CD8-positive, alpha-beta T cell (primary cell): ENCODE measurements at regions of chr1 and their contacts with region 1.

Region 1: DNA sequence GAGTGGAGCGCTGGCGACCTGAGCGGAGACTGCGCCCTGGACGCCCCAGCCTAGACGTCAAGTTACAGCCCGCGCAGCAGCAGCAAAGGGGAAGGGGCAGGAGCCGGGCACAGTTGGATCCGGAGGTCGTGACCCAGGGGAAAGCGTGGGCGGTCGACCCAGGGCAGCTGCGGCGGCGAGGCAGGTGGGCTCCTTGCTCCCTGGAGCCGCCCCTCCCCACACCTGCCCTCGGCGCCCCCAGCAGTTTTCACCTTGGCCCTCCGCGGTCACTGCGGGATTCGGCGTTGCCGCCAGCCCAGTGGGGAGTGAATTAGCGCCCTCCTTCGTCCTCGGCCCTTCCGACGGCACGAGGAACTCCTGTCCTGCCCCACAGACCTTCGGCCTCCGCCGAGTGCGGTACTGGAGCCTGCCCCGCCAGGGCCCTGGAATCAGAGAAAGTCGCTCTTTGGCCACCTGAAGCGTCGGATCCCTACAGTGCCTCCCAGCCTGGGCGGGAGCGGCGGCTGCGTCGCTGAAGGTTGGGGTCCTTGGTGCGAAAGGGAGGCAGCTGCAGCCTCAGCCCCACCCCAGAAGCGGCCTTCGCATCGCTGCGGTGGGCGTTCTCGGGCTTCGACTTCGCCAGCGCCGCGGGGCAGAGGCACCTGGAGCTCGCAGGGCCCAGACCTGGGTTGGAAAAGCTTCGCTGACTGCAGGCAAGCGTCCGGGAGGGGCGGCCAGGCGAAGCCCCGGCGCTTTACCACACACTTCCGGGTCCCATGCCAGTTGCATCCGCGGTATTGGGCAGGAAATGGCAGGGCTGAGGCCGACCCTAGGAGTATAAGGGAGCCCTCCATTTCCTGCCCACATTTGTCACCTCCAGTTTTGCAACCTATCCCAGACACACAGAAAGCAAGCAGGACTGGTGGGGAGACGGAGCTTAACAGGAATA is 4.2 kb downstream of the TFAP2E start:
- DNase-seq: peak; percentile 27 to 85 (median 71)
- ATAC-seq: peak; percentile 78
- H3K4me3 ChIP-seq: peak overlapping the region; percentile 49 to 87
- H3K4me3 Mint-ChIP-seq: peak overlapping the region; percentile 90
- H3K27ac ChIP-seq: peak overlapping the region; percentile 4 to 54
- H3K27ac Mint-ChIP-seq: peak overlapping the region; percentile 82
- H3K4me1 ChIP-seq: peaks cover 24% of the 10 kb centered on the region
- H3K4me1 Mint-ChIP-seq: peaks cover 26% of the 10 kb centered on the region
- H3K27me3 ChIP-seq: no peaks in the 10 kb centered on the region
- H3K27me3 Mint-ChIP-seq: peaks cover 3% of the 10 kb centered on the region
- CTCF ChIP-seq: no peak

Region 2: DNA sequence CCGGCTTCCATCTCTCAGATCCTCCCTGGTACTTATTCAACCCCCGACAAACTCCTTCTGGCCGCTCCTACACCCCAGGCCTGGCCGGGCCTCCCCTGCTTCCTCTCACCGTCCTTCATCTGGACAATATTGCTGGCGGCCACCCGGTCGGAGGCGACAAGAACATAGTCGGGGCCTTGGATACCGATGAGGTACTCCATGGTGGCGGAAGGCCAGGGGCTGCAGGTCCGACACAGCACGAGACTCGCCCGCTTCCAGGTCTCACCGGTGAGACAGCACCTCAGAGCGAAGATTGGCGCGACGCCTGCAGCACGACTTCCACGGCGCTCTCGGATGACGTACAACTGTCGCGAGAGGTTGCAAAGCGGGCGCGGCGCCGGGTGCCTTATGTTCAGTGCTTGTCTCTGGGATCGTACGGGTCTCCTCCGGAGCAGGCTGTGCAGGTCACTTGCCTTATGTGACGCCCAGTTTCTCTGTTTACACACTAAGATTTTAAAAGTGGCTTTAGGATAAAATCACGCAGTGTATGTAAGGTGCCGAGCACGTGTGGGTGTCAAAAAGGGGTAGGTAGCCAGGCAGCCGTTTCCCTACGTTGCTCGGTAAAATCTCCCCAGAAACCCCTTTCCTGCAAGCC is 64.0 kb after region 1 on chr1 and contains the start of gene PSMB2:
- CTCF ChIA-PET with region 1: no interaction called
- POLR2A ChIA-PET with region 1: no interaction called
- intact Hi-C with region 1: loop called in 1 of 2 experiments (anchors 5 kb)
- DNase-seq: peak; percentile 91 to 99 (median 97)
- ATAC-seq: peak; percentile 94
- H3K4me3 ChIP-seq: peak within 1 kb of the TSS; percentile 94 to 97
- H3K4me3 Mint-ChIP-seq: peak within 1 kb of the TSS; percentile 100
- H3K27ac ChIP-seq: peak within 1 kb of the TSS; percentile 89 to 93
- H3K27ac Mint-ChIP-seq: peak within 1 kb of the TSS; percentile 97
- H3K4me1 ChIP-seq: peaks cover 33% of the 10 kb centered on the region
- H3K4me1 Mint-ChIP-seq: peaks cover 37% of the 10 kb centered on the region
- H3K27me3 ChIP-seq: peaks cover 0 to 8% of the 10 kb centered on the region in 2 experiments
- H3K27me3 Mint-ChIP-seq: peaks cover 16% of the 10 kb centered on the region
- CTCF ChIP-seq: no peak
- total RNA-seq, gene PSMB2: 36.8 to 38.8 TPM

Region 3: GRCh38 chr1:35777109-35777508 is 199.8 kb after region 1 on chr1:
- CTCF ChIA-PET with region 1: interaction called, 17 read pairs
- POLR2A ChIA-PET with region 1: no interaction called
- intact Hi-C with region 1: no loop called
- DNase-seq: no peak
- ATAC-seq: no peak
- H3K4me3 ChIP-seq: no peak overlapping the region
- H3K4me3 Mint-ChIP-seq: no peak overlapping the region
- H3K27ac ChIP-seq: no peak overlapping the region
- H3K27ac Mint-ChIP-seq: peak overlapping the region; percentile 8
- H3K4me1 ChIP-seq: peaks cover 5% of the 10 kb centered on the region
- H3K4me1 Mint-ChIP-seq: peaks cover 8% of the 10 kb centered on the region
- H3K27me3 ChIP-seq: no peaks in the 10 kb centered on the region
- H3K27me3 Mint-ChIP-seq: no peaks in the 10 kb centered on the region
- CTCF ChIP-seq: no peak